Activated CD4-positive, alpha-beta T cell treated with anti-CD3 and anti-CD28 coated beads, Interleukin-2, amount 10 ng/mL, durations not matched to agents 24 days and 14 days (primary cell): ENCODE measurements at regions of chr1 and their contacts with region 1.

Region 1: DNA sequence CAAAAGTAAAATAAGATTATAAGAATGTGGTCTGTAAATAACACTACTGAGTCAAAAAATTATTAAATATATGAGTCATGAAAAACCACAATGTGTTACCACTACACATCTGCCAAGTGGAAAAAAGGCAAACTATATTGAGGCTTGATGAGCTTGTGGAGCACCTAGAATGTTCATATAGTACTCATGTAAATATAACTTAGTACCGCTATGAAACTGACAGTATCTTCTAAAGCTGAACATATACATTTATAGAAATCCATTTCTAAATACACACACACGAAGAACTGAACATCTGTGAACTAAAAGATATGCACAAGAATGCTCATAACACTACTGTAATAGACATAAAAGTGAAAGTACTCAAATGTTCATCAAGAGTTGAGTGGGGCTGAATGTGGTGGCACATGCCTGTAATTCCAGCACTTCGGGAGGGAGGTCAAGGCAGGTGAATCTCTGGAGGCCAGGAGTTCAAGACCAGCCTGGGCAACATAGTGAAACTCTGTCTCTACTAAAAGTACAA is 18.5 kb upstream of the GBP3 start:
- DNase-seq: peak; percentile 66
- H3K4me3 Mint-ChIP-seq: peak overlapping the region; percentile 59
- H3K27ac Mint-ChIP-seq: peak overlapping the region; percentile 82
- H3K4me1 Mint-ChIP-seq: peaks cover 32% of the 10 kb centered on the region
- H3K27me3 Mint-ChIP-seq: peaks cover 10% of the 10 kb centered on the region

Region 2: DNA sequence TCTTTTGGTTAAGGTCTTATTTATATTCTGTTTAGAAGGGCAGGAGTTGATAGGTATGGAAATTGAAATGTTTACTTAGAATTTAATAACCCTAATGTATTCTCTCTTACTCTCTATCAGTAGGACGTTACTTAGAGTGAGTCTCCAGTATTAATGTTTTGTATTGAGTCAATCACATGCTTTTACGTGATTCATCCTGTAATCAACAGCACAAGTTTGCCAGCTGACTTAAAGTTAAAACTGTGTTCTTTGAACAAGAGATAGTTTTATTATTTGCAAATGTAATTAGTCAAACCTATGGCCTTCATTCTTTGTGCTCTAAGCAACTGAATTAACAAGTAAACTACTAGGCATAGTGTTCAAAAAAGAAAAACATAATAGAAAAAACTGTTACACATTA is 299.8 kb before region 1 on chr1:
- intact Hi-C with region 1: no loop called
- DNase-seq: no peak
- H3K4me3 Mint-ChIP-seq: no peak overlapping the region
- H3K27ac Mint-ChIP-seq: no peak overlapping the region
- H3K4me1 Mint-ChIP-seq: peaks cover 18% of the 10 kb centered on the region
- H3K27me3 Mint-ChIP-seq: no peaks in the 10 kb centered on the region

Region 3: GRCh38 chr1:88983791-88984559 is 57.2 kb before region 1 on chr1:
- intact Hi-C with region 1: loop called (anchors 1 kb)
- DNase-seq: peak; percentile 79
- H3K4me3 Mint-ChIP-seq: peak overlapping the region; percentile 54
- H3K27ac Mint-ChIP-seq: peak overlapping the region; percentile 90
- H3K4me1 Mint-ChIP-seq: peaks cover 77% of the 10 kb centered on the region
- H3K27me3 Mint-ChIP-seq: no peaks in the 10 kb centered on the region

Region 4: DNA sequence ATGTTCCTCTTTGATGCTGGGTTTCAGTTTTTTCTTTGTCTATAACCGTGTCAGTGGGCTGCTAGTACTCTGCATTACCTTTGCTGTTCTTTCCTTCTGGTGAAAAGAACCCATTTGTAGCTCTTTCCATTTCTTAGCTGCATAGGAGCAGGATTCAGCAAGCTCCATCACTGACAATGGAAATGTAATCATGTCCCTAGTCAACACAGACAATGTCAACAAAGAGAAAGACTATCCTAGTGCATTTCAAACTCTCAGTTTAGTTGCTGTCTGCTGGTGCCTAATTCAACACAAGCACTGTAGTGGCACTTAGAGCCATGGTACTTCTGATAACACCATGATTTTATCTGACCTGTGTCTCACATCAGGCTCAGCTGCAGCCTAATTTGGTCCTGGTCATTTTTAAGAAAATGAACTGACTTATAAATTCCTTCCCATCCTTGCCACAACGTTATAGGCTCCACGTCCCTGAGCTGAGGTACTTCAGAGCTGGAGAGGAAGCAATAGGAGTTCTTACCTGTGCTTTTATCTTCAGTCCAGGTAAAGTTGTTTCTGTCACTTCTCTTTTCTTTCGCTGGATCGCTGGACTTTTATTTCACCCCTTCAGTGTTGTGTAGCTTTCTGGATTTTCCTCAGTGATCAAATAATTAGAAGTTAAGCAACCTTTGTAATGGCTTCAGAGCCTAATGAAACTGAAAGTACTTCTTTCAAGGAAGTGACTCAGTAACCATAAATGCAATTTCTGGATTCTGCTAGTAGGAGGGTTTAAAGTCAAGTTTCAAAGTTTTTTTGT is 18.8 kb before region 1 on chr1 and contains the start of gene GBP3:
- intact Hi-C with region 1: loop called (anchors 1 kb)
- DNase-seq: peak; percentile 75
- H3K4me3 Mint-ChIP-seq: peak within 1 kb of the TSS; percentile 86
- H3K27ac Mint-ChIP-seq: peak within 1 kb of the TSS; percentile 80
- H3K4me1 Mint-ChIP-seq: peaks cover 44% of the 10 kb centered on the region
- H3K27me3 Mint-ChIP-seq: no peaks in the 10 kb centered on the region
- total RNA-seq, gene GBP3: 7.1 and 8.1 TPM in 2 replicates

Region 5: GRCh38 chr1:89125913-89126580 is 84.9 kb after region 1 on chr1 and contains the start of gene GBP2:
- intact Hi-C with region 1: loop called (anchors 2 kb)
- DNase-seq: peak; percentile 81
- H3K4me3 Mint-ChIP-seq: peak within 1 kb of the TSS; percentile 93
- H3K27ac Mint-ChIP-seq: peak within 1 kb of the TSS; percentile 98
- H3K4me1 Mint-ChIP-seq: peaks cover 61% of the 10 kb centered on the region
- H3K27me3 Mint-ChIP-seq: no peaks in the 10 kb centered on the region
- total RNA-seq, gene GBP2: 168 and 169 TPM in 2 replicates

Region 6: DNA sequence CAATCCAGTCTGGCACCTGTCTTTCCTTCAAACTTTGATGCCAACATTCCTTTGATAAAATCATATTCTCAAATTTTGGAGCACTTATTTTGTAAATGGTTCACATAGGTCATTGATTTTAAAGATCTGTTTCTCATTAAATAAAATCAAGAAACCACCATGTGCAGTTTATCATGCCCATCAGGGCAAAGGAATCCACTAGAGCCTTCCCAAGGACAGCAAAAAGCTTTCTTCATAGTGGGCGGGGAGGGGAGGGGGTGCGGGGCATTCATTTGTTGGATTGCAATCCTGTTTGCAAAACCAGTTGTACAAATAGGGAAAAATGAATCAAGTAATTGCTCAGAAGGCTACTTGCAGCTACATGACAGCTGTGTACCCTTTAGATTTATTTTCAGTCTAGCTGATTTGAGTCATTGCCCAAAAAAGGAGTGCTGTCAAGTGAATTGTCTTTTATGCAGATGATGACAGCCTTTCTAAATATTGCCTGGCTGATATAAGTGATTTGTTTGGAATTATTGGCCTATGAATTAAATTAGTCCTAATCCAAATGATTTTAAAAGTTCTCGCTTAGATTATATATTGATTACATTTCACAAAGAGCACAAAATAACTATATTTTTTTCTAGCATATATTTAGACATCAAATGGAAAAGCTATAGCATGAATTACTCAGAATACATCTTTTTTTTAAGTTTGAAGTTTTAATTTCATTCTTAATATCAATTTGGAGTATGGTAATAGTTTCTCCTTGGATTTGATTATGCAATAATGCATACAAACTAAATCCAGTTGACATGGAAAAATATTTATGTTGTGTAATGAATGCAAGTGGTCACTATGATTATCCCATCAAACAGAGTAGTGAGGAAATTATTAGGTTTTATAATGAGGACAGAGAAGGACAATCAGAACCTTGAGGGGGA is 506.6 kb after region 1 on chr1:
- intact Hi-C with region 1: loop called (anchors 2 kb)
- DNase-seq: peak; percentile 43
- H3K4me3 Mint-ChIP-seq: peak overlapping the region; percentile 28
- H3K27ac Mint-ChIP-seq: peak overlapping the region; percentile 92
- H3K4me1 Mint-ChIP-seq: peaks cover 78% of the 10 kb centered on the region
- H3K27me3 Mint-ChIP-seq: peaks cover 2% of the 10 kb centered on the region

Region 7: GRCh38 chr1:89739013-89739843 is 698.0 kb after region 1 on chr1:
- intact Hi-C with region 1: loop called (anchors 10 kb)
- DNase-seq: peak; percentile 76
- H3K4me3 Mint-ChIP-seq: peak overlapping the region; percentile 78
- H3K27ac Mint-ChIP-seq: peak overlapping the region; percentile 94
- H3K4me1 Mint-ChIP-seq: peaks cover 40% of the 10 kb centered on the region
- H3K27me3 Mint-ChIP-seq: no peaks in the 10 kb centered on the region